Posterior vena cava (tissue), 2 donors: ENCODE measurements at regions of chr6 and their contacts with region 1.

Region 1: GRCh38 chr6:44086931-44087574 is 40.2 kb downstream of the MRPL14 start:
- DNase-seq: no peak

Region 2: DNA sequence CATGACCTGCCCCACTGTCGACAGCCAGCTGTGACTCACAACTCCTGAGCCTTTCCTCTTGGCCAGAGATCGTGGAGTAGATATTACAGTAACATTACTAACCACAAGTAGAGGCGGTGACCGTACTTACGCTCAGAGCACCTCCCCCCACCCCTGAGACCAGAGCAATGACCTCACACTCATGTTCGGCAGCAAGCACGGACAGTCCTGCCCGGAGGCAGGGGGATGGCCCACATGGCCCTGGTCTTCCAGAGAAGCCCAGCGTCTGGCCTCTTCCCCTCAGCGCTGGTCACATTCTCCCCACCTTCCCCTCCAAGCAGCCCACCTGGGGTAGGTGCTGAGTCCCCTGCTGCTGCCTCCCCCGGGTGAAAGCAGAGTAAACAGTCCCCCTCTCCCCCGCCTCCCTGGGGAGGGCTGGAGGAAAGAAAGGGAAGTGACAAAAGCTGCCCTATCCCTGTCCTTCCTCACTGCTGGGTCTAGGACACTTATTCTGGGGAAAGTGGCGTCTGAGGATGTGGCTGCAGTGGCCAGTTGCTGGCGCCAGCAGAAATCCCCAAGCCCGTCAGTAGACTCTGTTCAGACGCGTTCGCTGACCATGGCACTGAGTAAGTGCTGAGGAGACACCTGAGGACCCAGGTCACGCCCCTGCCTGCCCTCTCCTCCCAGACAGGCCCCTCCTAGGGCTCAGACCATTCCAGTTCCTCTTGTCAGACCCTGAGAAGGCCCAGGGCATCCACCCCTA is 28.3 kb before region 1 on chr6:
- intact Hi-C with region 1: loop called in 1 of 2 experiments (anchors 1 kb)
- DNase-seq: peak; percentile 97

Region 3: DNA sequence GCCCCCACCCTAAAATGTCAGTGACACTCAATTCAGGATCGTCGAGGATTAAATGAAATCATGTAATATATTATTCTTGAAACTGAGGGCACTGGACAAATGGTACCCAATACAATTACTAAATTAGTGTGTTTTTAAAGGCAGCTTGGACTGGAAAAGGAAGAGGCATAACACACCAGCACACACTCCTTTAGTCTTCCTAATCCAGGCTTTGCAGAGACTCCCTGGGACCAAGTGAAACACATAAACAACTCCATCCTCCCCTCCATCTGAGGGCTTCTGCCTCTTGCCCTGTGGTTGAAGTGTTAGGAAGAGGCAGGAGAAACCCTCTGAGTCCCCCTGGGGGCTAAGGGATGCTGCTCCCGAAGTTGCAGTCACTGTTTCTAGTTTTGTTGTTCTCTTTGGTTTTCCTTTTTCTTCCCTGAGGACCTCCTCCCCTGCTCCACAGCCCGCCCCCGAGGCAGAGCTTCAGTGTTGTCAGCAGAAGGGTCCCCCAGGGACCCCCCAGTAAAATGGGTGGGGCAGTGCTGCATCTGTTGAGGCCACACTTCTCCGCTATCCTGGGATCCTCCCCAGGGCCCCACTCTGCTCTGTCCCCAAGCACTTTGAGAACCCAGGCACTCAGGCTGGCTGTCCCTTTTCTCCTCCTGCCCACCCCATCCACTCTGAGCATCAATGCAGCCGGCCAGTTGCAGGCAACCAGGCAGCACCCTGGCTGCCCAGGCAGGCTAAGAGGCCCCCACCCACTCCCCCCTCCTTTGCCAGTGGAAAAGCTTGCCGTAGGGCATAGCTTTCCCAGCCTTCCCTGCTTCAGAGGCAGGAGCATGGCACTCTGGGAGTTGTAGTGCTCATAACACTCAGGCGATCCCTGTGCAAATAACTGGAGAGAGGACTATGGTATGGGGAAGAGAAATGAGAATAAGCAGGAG is 46.2 kb after region 1 on chr6:
- intact Hi-C with region 1: no loop called
- DNase-seq: no peak

Region 4: GRCh38 chr6:44415873-44416502 is 328.9 kb after region 1 on chr6:
- intact Hi-C with region 1: no loop called
- DNase-seq: no peak